Ascending aorta (tissue), 2 donors: ENCODE measurements at regions of chr10 and their contacts with region 1.

Region 1: DNA sequence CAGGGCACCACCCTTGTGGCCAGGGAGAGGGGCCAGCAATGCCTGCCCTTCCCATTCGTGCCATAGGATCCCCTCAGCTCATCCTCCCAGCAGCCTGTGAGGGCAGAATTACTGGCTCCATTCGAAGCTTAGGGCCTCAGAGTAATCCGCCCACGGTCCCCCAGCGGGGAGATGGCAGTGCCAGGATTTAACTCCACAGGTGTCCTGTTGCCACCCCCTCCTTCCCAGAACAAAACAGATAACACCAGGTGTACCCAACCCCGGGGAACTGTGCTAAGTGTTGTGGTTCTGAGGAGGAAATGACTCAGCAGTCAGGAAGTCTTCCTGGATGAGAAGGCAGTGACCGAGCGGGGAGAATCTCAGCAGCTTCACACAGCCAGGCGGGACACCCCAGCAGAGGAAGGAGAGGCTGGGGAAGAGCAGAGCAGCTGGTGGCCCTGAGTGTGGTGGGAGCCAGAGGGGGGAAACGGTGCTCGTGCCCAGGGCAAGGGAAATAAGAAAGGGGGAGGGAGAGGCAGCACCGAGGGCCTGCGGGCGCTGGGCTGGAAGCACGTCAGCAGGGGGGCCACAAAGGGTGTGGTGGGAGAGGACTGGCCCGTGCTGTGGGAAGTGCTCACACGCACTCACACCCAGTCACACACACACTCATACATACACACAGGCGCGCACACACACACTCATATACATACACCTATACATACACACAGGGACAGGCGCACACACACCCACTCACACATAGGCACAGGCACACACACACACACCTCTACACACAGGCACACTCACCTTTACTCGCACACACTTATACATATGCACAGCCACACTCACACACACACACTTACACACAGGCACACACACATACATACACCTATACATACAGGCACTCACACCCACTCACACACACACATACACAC is 59.8 kb upstream of the CHST15 start:
- DNase-seq: peak; percentile 17 to 81
- H3K4me3 ChIP-seq: no peak overlapping the region
- H3K27ac ChIP-seq: peak overlapping the region; percentile 78 to 90
- H3K4me1 ChIP-seq: peaks cover 28 to 52% of the 10 kb centered on the region in 2 donors
- H3K27me3 ChIP-seq: no peaks in the 10 kb centered on the region
- CTCF ChIP-seq: no peak

Region 2: DNA sequence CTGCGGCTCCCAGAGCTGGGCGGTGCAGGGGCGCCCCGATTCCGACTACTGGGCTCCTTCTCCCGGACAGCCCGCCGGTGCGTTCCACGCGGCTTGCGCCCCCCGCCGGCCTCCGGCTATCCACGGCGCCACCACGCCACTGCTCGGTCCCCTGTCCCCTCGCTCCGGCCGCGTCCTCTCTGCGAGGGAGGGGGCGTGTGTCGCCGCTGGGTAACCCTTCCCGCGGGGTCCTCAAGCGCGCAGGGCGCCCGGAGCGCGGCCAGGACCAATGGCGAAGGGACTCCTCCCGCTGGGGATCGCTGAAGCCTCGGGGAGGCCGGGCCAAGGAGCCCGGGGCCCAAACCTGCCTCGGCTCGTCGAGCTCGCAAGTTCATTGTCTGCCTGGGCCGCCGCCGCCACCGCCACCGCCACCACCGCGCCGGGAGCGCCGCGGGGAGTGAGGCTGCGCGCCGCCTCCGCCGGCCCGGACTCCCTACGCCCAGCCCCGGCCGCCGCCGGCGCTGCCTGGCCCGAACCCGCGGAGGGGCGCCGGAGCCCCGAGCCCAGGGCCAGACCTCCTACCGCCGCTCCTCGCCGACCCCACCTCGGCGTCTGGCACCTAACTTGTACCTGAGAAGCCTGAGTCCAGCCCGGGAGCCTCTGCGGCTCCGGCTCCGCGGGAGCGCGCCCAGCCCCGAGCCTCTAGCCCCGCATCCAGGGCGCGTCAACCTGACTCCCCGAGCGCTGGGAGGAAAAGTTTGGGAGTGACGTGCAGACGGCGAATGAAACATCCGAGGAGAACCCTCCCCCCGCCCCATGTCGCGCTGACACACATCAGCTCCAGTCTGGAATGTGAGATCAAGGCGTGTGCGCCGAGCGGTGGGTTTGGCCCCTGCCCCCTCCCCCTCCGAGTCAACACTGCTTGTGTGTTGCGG is 60.1 kb before region 1 on chr10 and contains the start of gene CHST15:
- intact Hi-C with region 1: loop called (anchors 2 kb)
- DNase-seq: peak in 1 of 2 donors; percentile 80
- H3K4me3 ChIP-seq: peak within 1 kb of the TSS; percentile 73 to 79
- H3K27ac ChIP-seq: peak within 1 kb of the TSS; percentile 87 to 88
- H3K4me1 ChIP-seq: peaks cover 0 to 19% of the 10 kb centered on the region in 2 donors
- H3K27me3 ChIP-seq: no peaks in the 10 kb centered on the region
- CTCF ChIP-seq: peak in 2 of 3 experiments; percentile 16 to 38
- total RNA-seq, gene CHST15: 20.4 TPM

Region 3: DNA sequence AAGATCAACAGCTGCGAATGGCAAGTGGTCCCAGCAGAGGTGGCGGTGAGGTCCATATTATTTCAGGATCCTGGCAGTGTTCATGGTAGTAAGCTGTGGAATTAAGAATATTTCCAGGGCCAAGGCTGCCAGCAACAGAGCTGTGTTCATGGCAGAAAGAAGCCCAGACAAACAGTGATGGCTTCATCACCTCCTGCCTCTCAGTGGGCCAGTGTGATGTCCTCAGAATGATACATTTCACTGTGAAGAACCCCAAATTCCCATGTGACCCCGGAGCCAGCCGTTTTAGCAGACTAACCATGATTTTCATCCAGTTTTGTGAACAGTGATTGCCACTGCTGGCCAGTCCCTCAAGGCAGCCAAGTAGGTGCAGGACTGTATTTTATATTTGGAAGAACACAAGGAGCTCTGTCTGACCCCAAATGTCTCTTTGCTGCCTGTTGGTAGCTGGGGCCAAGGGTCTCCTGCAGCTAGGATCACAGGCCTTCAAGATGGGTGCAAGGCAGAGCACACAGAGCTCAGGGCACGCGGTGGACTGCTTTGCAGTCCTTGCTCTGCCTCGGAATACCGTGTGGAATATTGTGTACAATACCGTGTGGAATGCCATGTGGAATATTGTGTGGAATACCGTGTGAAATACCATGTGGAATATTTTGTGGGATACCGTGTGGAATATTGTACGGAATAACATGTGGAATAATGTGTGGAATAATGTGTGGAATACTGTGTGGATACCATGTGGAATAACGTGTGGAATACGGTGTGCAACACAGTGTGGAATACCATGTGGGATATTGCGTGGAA is 72.5 kb after region 1 on chr10:
- intact Hi-C with region 1: loop called (anchors 2 kb)
- DNase-seq: peak in 1 of 2 donors; percentile 65
- H3K4me3 ChIP-seq: no peak overlapping the region
- H3K27ac ChIP-seq: peak overlapping the region; percentile 71 to 83
- H3K4me1 ChIP-seq: peaks cover 16 to 44% of the 10 kb centered on the region in 2 donors
- H3K27me3 ChIP-seq: no peaks in the 10 kb centered on the region
- CTCF ChIP-seq: no peak

Region 4: GRCh38 chr10:124388823-124389612 is 235.8 kb after region 1 on chr10:
- intact Hi-C with region 1: loop called (anchors 5 kb)
- DNase-seq: peak; percentile 51 to 93
- H3K4me3 ChIP-seq: peak overlapping the region; percentile 51 to 61
- H3K27ac ChIP-seq: no peak overlapping the region
- H3K4me1 ChIP-seq: peaks cover 4 to 17% of the 10 kb centered on the region in 2 donors
- H3K27me3 ChIP-seq: no peaks in the 10 kb centered on the region
- CTCF ChIP-seq: peak; percentile 84 to 97 (median 91)

Region 5: DNA sequence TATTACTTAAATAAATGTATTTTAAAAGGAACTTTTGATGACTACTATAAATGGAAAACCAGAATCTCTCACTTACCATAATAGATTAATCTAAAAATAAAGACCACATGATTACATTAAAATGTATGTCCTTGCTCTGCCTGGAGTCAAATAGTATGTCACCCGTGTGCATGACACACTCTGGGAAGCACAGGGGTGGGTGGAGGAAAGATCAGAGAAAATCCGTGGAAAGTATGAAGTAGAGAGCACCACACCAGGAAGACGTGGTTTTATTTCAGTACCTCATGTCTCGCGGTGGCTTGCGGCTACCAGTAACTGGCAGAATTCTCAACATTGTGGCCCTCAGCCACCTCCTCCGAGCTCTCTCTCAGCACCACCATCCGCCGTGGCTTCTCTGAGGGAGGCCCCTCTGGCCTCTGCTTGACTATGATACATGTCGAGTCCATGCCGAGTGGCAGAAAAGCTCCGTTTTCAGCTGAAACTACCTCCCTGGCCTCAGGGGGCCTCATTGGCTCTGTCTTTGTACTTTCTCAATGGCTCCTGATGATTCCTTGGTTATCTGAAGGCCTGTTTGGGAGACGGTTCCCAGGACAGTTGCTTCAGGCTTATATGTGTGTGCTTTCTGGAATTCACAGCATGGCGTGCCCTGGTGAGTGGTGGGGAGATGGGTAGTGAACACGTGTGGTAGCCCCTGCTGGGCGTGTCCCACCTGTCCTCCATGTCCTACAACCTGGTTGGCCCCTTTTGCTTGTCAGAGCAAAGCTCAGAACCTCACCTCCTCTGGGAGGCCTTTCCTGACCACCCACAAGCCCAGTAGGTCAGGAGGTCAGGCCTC is 358.3 kb after region 1 on chr10:
- intact Hi-C with region 1: no loop called
- DNase-seq: no peak
- H3K4me3 ChIP-seq: no peak overlapping the region
- H3K27ac ChIP-seq: no peak overlapping the region
- H3K4me1 ChIP-seq: no peaks in the 10 kb centered on the region
- H3K27me3 ChIP-seq: no peaks in the 10 kb centered on the region
- CTCF ChIP-seq: no peak